Adrenal gland (tissue), 19 donors: ENCODE measurements at regions of chr1 and their contacts with region 1.

Region 1: GRCh38 chr1:34786521-34787325 is 5.7 kb downstream of the GJB3 start:
- DNase-seq: peak; percentile 67 to 93 (median 84)
- H3K4me3 ChIP-seq: no peak overlapping the region
- H3K27ac ChIP-seq: peak overlapping the region in 1 of 5 donors; percentile 58
- H3K4me1 ChIP-seq: peaks cover 0 to 5% of the 10 kb centered on the region in 2 donors
- H3K27me3 ChIP-seq: peaks cover 8% of the 10 kb centered on the region
- CTCF ChIP-seq: peak; percentile 72 to 92 (median 89)
- POLR2A ChIP-seq: no peak

Region 2: GRCh38 chr1:34742667-34743270 is 44.0 kb before region 1 on chr1:
- intact Hi-C with region 1: no loop called
- DNase-seq: peak; percentile 67 to 86 (median 80)
- H3K4me3 ChIP-seq: no peak overlapping the region
- H3K27ac ChIP-seq: no peak overlapping the region
- H3K4me1 ChIP-seq: no peaks in the 10 kb centered on the region
- H3K27me3 ChIP-seq: no peaks in the 10 kb centered on the region
- CTCF ChIP-seq: peak; percentile 69 to 97 (median 88)
- POLR2A ChIP-seq: no peak

Region 3: GRCh38 chr1:34816778-34817177 is 30.1 kb after region 1 on chr1:
- intact Hi-C with region 1: no loop called
- DNase-seq: no peak
- H3K4me3 ChIP-seq: no peak overlapping the region
- H3K27ac ChIP-seq: no peak overlapping the region
- H3K4me1 ChIP-seq: no peaks in the 10 kb centered on the region
- H3K27me3 ChIP-seq: no peaks in the 10 kb centered on the region
- CTCF ChIP-seq: no peak
- POLR2A ChIP-seq: no peak

Region 4: DNA sequence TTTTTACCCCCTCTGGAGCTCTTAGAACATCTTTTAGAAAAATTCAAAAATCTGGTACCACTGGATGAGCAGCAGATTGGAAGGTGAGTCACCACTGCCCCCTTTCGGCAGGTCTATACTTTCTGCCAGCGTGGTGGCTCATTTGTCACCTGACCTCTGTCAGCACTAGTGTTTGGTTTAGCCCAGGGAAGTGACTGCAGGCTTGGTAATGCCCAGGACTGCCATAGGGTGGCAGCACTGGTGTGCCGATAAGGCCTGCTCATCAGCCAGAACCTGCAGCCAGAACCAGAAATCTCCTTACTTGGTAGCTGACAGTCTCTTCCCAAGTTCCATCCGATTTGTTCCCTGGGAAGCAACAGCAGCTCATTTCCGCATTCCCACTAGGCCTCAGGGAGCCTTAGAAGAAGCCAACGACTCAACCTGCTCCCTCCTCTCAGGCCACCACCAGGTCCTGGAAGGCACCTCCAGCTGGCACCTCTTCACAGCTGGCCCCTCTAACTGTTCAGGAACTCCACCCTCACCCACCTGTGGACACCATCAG is 66.0 kb after region 1 on chr1:
- intact Hi-C with region 1: loop called in 1 of 2 experiments (anchors 5 kb)
- DNase-seq: peak; percentile 92 to 99 (median 97)
- H3K4me3 ChIP-seq: no peak overlapping the region
- H3K27ac ChIP-seq: peak overlapping the region in 3 of 5 donors; percentile 43 to 81 (median 76)
- H3K4me1 ChIP-seq: peaks cover 23 to 29% of the 10 kb centered on the region in 2 donors
- H3K27me3 ChIP-seq: no peaks in the 10 kb centered on the region
- CTCF ChIP-seq: peak; percentile 93 to 100 (median 100)
- POLR2A ChIP-seq: no peak

Region 5: DNA sequence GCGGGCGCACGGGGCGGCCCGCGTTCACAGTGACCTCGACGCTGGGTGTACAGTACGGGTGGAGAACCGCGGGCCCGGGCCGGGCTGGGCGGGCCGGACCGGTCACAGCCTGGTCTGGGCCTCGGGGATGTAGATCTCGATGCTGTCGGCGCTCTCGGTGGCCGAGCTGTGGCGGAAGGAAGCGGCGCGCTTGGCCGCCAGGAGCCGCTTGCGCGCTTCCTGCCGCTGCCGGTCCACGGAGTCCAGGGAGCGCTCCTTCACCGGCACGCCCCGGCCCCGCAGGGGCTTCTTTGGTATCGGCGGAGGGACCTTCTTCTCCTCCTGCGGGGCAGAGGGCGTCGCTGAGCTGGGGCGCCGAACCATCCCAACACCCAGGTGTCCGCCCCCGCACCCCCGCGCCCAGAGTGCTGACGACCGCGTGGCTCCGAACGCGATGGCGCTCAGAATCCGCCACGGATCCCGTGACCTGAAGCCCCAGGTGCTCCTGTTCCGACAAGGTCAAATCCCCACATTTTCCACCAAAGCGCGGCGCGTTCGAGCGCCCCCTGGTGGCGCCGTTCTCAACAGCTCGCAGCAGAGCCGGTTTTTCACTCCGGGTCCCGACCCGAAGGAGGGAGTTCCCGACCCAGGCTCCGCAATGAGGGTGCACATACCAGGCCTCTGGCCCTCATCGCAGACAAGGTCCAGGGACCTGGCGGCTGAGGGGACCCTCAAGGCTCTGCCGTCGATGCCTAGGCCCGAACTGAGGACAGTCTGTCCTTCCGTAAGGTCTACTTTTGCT is 79.4 kb after region 1 on chr1:
- intact Hi-C with region 1: loop called (anchors 5 kb)
- DNase-seq: peak; percentile 82 to 94 (median 88)
- H3K4me3 ChIP-seq: peak overlapping the region; percentile 25 to 87 (median 71)
- H3K27ac ChIP-seq: peak overlapping the region in 4 of 5 donors; percentile 53 to 84 (median 74)
- H3K4me1 ChIP-seq: peaks cover 8 to 11% of the 10 kb centered on the region in 2 donors
- H3K27me3 ChIP-seq: no peaks in the 10 kb centered on the region
- CTCF ChIP-seq: peak; percentile 92 to 99 (median 96)
- POLR2A ChIP-seq: peak; percentile 22 to 27

Region 6: DNA sequence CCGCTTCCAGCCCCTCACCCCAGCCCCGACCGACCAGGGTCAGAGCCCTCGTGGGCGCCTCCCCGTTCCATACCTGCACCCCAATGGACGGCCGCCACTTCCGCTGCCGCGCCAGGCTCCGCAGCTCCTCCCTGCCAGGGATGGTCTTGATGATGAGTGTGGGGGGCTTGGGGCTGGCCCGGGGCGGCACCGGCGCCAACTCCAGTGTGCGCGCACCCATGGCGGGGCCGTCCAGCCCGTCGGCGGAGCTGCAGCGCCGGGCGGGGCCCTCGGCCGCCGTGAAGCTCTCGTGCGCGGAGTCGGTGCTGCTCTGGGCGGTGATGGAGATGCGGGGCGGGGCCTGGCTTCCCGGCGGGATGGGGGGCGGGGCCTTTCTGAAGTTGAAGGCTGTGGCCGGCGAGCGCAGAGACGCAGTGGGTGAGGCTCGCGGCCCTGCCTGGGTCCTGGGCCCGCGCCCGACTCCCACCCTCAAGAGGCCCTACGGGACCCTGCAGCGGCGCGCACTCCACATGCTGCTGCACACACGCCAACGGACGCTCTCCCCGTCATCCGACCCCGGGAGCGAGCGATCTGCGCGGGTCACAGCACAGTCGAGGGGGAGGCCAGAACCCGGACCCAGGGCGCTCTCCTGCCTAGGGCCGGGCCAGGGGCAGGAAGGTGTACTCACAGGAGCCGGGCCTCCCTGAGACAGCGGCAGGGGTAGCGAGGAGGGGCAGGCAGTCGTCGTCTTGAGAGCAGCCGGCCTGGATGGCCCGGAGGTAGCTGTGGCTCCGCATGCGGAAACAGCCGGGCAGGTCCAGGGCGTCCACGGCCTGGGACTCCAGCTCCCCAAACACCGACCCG is 98.9 kb after region 1 on chr1:
- intact Hi-C with region 1: no loop called
- DNase-seq: peak in 3 of 7 donors; percentile 37 to 60 (median 38)
- H3K4me3 ChIP-seq: peak overlapping the region in 1 of 4 donors; percentile 42
- H3K27ac ChIP-seq: no peak overlapping the region
- H3K4me1 ChIP-seq: peaks cover 0 to 6% of the 10 kb centered on the region in 2 donors
- H3K27me3 ChIP-seq: peaks cover 15% of the 10 kb centered on the region
- CTCF ChIP-seq: no peak
- POLR2A ChIP-seq: no peak